H1 (cell line): ENCODE measurements at regions of chr10 and their contacts with region 1.

Region 1: GRCh38 chr10:29119374-29119773 is 169.5 kb upstream of the LYZL1 start:
- DNase-seq: peak; percentile 64 to 96
- H3K4me3 ChIP-seq: no peak overlapping the region
- H3K27ac ChIP-seq: no peak overlapping the region
- H3K4me1 ChIP-seq: 0 out of 7 replicates have a peak, but pooled peaks cover 0 to 2% (median 0%) of the 10 kb centered on the region in 4 experiments
- H3K27me3 ChIP-seq: no peaks in the 10 kb centered on the region
- CTCF ChIP-seq: peak; percentile 81 to 95 (median 81)
- EP300 ChIP-seq: no peak
- POLR2A ChIP-seq: no peak
- RAD21 ChIP-seq: peak; percentile 69 to 78

Region 2: GRCh38 chr10:29011516-29011915 is 107.9 kb before region 1 on chr10:
- CTCF ChIA-PET with region 1: no interaction called
- POLR2A ChIA-PET with region 1: no interaction called
- DNase-seq: no peak
- H3K4me3 ChIP-seq: no peak overlapping the region
- H3K27ac ChIP-seq: no peak overlapping the region
- H3K4me1 ChIP-seq: no peaks in the 10 kb centered on the region
- H3K27me3 ChIP-seq: no peaks in the 10 kb centered on the region
- CTCF ChIP-seq: no peak
- EP300 ChIP-seq: no peak
- POLR2A ChIP-seq: no peak
- RAD21 ChIP-seq: no peak

Region 3: GRCh38 chr10:29105531-29106215 is 13.7 kb before region 1 on chr10:
- CTCF ChIA-PET with region 1: interaction called, 47 read pairs
- POLR2A ChIA-PET with region 1: no interaction called
- DNase-seq: no peak
- H3K4me3 ChIP-seq: no peak overlapping the region
- H3K27ac ChIP-seq: no peak overlapping the region
- H3K4me1 ChIP-seq: no peaks in the 10 kb centered on the region
- H3K27me3 ChIP-seq: no peaks in the 10 kb centered on the region
- CTCF ChIP-seq: no peak
- EP300 ChIP-seq: no peak
- POLR2A ChIP-seq: no peak
- RAD21 ChIP-seq: no peak

Region 4: GRCh38 chr10:29163749-29164148 is 44.4 kb after region 1 on chr10:
- CTCF ChIA-PET with region 1: no interaction called
- POLR2A ChIA-PET with region 1: no interaction called
- DNase-seq: no peak
- H3K4me3 ChIP-seq: no peak overlapping the region
- H3K27ac ChIP-seq: no peak overlapping the region
- H3K4me1 ChIP-seq: peaks cover 4 to 14% (median 10%) of the 10 kb centered on the region in 4 experiments; a peak in 5 of 7 replicates
- H3K27me3 ChIP-seq: no peaks in the 10 kb centered on the region
- CTCF ChIP-seq: no peak
- EP300 ChIP-seq: no peak
- POLR2A ChIP-seq: no peak
- RAD21 ChIP-seq: no peak

Region 5: GRCh38 chr10:29204070-29204800 is 84.9 kb after region 1 on chr10:
- CTCF ChIA-PET with region 1: no interaction called
- POLR2A ChIA-PET with region 1: no interaction called
- DNase-seq: no peak
- H3K4me3 ChIP-seq: no peak overlapping the region
- H3K27ac ChIP-seq: no peak overlapping the region
- H3K4me1 ChIP-seq: peaks cover 3 to 11% (median 8%) of the 10 kb centered on the region in 4 experiments; a peak in 5 of 7 replicates
- H3K27me3 ChIP-seq: no peaks in the 10 kb centered on the region
- CTCF ChIP-seq: no peak
- EP300 ChIP-seq: no peak
- POLR2A ChIP-seq: 0 out of 3 replicates have a peak, but pooled peaks of 1 of the 2 experiments have one; percentile 27
- RAD21 ChIP-seq: no peak

Region 6: DNA sequence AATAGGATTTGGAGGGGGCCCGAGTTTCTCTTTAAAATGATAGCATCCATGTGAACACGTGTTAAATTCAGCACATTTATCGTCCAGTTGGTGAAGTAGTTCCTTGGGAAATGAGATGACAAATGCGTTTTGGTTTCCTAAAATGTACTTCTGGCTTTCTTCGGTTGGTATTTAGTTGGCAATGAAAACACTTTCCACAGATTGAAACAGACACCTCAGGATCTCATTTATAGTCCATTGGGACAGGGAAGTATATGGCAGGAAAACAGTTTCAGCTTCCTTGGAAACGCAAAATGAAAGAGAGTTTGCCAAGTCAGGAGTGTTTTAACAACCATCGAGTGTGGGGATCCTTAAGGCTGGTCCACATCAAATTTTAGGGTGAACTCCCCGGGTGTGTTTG is 150.1 kb after region 1 on chr10:
- CTCF ChIA-PET with region 1: no interaction called
- POLR2A ChIA-PET with region 1: no interaction called
- DNase-seq: no peak
- H3K4me3 ChIP-seq: no peak overlapping the region
- H3K27ac ChIP-seq: no peak overlapping the region
- H3K4me1 ChIP-seq: peaks cover 2 to 3% (median 2%) of the 10 kb centered on the region in 4 experiments; a peak in 5 of 7 replicates
- H3K27me3 ChIP-seq: no peaks in the 10 kb centered on the region
- CTCF ChIP-seq: no peak
- EP300 ChIP-seq: no peak
- POLR2A ChIP-seq: no peak
- RAD21 ChIP-seq: no peak